Prostate gland (tissue), 2 donors: ENCODE measurements at regions of chr1 and their contacts with region 1.

Region 1: GRCh38 chr1:244272471-244273261 is 179.0 kb downstream of the ADSS2 start:
- DNase-seq: peak; percentile 65
- H3K4me3 ChIP-seq: no peak overlapping the region
- H3K27ac ChIP-seq: no peak overlapping the region
- H3K4me1 ChIP-seq: no peaks in the 10 kb centered on the region
- H3K27me3 ChIP-seq: no peaks in the 10 kb centered on the region
- CTCF ChIP-seq: peak; percentile 87 to 98 (median 94)
- POLR2A ChIP-seq: no peak

Region 2: GRCh38 chr1:243343970-243344937 is 928.4 kb before region 1 on chr1:
- intact Hi-C with region 1: loop called (anchors 1 kb)
- DNase-seq: no peak
- H3K4me3 ChIP-seq: no peak overlapping the region
- H3K27ac ChIP-seq: no peak overlapping the region
- H3K4me1 ChIP-seq: no peaks in the 10 kb centered on the region
- H3K27me3 ChIP-seq: no peaks in the 10 kb centered on the region
- CTCF ChIP-seq: peak; percentile 51 to 87 (median 76)
- POLR2A ChIP-seq: no peak

Region 3: DNA sequence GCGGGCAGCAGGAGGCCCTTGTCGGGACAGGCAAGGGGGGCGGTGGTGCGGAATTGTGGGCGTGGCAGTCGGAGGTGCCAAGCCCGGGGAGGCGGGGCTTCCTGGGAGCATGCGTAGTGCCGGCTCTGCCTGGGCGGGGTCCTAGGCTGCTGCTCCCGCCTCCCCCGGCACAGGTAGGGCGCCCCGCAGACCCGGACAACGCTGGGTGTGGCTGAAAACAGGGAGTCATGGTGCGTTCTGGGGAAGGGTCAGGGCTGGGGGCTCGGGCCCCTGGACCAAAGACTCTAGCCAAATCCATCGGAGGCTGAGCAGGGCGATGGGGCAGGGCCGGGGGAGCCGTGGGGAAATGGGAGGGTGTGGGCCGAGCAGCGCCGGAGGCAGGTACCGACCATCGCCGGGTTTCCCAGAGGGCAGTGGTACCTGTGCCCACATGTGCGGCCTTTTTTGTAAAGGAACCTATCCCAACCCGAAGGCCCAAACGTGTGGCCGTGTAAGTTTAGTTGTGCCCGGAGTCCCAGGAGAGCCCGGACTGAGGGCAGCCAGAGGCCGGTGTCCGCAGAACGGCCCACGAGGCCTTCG is 784.9 kb before region 1 on chr1:
- intact Hi-C with region 1: loop called (anchors 5 kb)
- DNase-seq: no peak
- H3K4me3 ChIP-seq: peak overlapping the region; percentile 24
- H3K27ac ChIP-seq: no peak overlapping the region
- H3K4me1 ChIP-seq: no peaks in the 10 kb centered on the region
- H3K27me3 ChIP-seq: no peaks in the 10 kb centered on the region
- CTCF ChIP-seq: no peak
- POLR2A ChIP-seq: no peak

Region 4: DNA sequence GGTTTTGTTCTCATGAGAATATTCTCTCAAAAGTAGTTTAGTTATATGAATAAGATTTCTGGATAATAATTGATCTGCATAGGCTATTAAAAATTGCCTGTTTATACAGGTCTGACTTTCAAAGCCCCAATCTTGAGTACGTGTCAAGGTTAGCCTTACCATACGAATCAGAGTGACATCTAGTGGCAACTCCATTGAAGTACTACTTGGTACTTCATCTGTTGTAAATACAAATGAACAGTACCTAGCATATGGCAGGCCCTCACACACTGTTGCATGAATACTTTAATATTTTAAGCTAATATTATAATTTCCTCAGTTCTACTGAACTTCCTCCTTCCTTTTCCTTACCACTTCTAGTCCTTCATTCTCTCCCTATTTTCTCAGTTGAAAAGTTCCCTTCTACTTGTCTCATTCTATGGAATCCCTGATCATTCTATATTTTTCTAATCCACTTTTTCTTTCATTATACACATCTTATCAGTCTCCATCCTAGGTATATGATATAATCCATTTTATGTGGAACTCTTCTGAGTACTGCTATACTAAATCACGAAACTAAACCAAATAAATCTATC is 523.9 kb before region 1 on chr1:
- intact Hi-C with region 1: loop called (anchors 10 kb)
- DNase-seq: peak; percentile 61
- H3K4me3 ChIP-seq: no peak overlapping the region
- H3K27ac ChIP-seq: no peak overlapping the region
- H3K4me1 ChIP-seq: no peaks in the 10 kb centered on the region
- H3K27me3 ChIP-seq: no peaks in the 10 kb centered on the region
- CTCF ChIP-seq: peak; percentile 63 to 77 (median 72)
- POLR2A ChIP-seq: no peak

Region 5: DNA sequence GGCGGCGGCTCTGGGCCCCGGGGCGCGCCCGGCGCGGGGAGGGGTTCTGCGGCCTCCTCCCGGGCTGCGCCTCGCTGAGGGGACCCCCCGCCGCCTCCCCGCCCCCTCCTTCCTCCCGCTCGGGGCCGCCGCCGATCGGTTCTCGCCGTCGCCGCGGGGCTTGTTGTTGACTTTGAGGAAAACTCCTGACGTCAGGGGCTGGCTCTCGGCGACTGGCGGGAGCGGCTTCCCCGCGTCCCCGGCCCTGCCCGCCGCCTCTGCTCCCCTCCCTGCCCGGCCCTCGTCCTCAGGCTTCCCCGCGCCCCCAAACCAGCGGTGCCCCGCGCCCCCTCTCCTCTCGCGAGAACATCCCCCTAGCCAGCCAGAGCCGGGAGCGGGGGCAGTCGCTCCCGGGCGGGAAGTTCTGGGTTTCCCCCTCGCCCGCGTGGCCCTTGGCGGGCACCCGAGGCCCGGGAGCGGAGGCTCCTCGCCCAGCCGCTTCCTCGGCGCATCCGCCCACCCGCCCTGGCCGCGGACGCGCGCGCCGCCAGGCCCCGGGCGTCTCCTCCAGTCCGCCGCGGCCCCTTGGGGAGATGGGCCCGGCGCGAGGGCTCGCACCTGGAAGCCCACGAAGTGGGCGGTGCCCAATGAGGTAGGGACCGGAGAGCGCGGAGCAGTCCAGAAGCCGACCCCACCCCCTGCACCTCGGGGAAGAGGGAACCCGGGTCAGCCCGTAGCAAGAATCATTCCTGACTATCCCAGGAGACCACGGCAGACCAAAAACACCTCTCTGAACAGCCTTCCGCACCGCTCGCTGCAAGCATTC is 422.0 kb before region 1 on chr1:
- intact Hi-C with region 1: loop called (anchors 5 kb)
- DNase-seq: peak; percentile 77
- H3K4me3 ChIP-seq: peak overlapping the region; percentile 89 to 91
- H3K27ac ChIP-seq: peak overlapping the region; percentile 99
- H3K4me1 ChIP-seq: no peaks in the 10 kb centered on the region
- H3K27me3 ChIP-seq: no peaks in the 10 kb centered on the region
- CTCF ChIP-seq: no peak
- POLR2A ChIP-seq: peak; percentile 69

Region 6: GRCh38 chr1:244214009-244214967 is 58.4 kb before region 1 on chr1:
- intact Hi-C with region 1: loop called (anchors 5 kb)
- DNase-seq: peak; percentile 11
- H3K4me3 ChIP-seq: no peak overlapping the region
- H3K27ac ChIP-seq: peak overlapping the region in 1 of 2 donors; percentile 26
- H3K4me1 ChIP-seq: peaks cover 5% of the 10 kb centered on the region
- H3K27me3 ChIP-seq: no peaks in the 10 kb centered on the region
- CTCF ChIP-seq: no peak
- POLR2A ChIP-seq: no peak

Region 7: DNA sequence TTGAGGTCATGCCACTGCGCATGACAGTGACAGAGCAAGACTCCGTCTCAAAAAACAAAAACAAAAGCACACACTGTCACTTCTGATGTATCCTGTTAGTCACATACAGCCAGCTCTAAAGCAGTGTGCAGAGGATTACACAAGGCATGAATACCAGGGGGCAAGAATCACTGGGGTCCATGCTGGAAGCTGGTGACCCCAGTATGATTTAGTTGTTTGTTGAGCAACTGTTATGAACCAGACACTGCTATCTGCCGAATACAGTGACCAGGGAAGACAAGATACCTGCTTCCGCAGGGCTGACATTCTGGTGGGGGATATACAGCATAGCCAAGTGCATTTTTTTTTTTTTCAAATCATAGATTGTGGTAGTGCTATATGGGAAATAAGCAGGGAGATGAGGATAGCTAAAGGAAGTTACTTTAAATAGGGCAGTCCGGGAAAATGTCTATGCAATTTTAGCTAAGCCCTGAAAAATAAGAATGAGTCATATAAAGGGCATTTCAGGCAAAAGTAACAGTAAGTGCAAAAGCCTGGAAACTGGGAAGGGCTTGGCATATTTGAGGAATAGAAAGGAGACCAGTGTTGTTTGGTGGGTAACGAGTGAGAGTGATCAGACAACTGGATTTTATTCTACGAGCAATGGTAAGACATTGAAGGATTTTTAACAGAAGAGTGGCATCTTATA is 109.4 kb after region 1 on chr1:
- intact Hi-C with region 1: no loop called
- DNase-seq: no peak
- H3K4me3 ChIP-seq: no peak overlapping the region
- H3K27ac ChIP-seq: no peak overlapping the region
- H3K4me1 ChIP-seq: no peaks in the 10 kb centered on the region
- H3K27me3 ChIP-seq: no peaks in the 10 kb centered on the region
- CTCF ChIP-seq: no peak
- POLR2A ChIP-seq: no peak